Activated CD8-positive, alpha-beta memory T cell treated with anti-CD3 and anti-CD28 coated beads, Interleukin-2, amount 10 ng/mL, durations not matched to agents 7 days and 5 days (primary cell): ENCODE measurements at regions of chr7 and their contacts with region 1.

Region 1: GRCh38 chr7:5396999-5397663 is 26.5 kb downstream of the TNRC18 start:
- DNase-seq: peak; percentile 96
- ATAC-seq: peak; percentile 94
- H3K4me3 Mint-ChIP-seq: peak overlapping the region; percentile 79
- H3K27ac Mint-ChIP-seq: peak overlapping the region; percentile 97
- H3K4me1 Mint-ChIP-seq: peaks cover 38% of the 10 kb centered on the region
- H3K27me3 Mint-ChIP-seq: no peaks in the 10 kb centered on the region

Region 2: GRCh38 chr7:5237286-5237685 is 159.8 kb before region 1 on chr7:
- CTCF ChIA-PET with region 1: interaction called, 18 read pairs
- DNase-seq: no peak
- ATAC-seq: no peak
- H3K4me3 Mint-ChIP-seq: no peak overlapping the region
- H3K27ac Mint-ChIP-seq: no peak overlapping the region
- H3K4me1 Mint-ChIP-seq: peaks cover 22% of the 10 kb centered on the region
- H3K27me3 Mint-ChIP-seq: peaks cover 24% of the 10 kb centered on the region

Region 3: DNA sequence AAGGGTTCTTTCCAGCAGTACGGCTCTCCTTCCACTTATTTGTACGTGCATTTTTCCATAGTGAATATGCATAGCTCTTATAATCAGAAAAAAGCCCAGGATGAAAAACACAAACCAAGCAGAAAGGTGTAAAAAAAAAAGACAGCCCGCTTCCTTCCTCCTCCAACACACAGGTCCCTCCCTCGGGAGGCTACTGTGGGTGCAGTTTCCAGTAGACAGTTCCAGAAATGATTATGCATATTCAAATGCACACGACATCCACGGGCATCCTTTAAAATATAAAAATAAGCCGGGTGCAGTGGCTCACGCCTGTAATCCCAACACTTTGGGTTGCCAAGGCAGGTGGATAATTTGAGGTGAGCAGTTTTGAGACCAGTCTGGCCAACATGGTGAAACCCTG is 33.4 kb before region 1 on chr7:
- CTCF ChIA-PET with region 1: interaction called, 13 read pairs
- DNase-seq: peak; percentile 56
- ATAC-seq: peak; percentile 66
- H3K4me3 Mint-ChIP-seq: no peak overlapping the region
- H3K27ac Mint-ChIP-seq: peak overlapping the region; percentile 45
- H3K4me1 Mint-ChIP-seq: peaks cover 27% of the 10 kb centered on the region
- H3K27me3 Mint-ChIP-seq: no peaks in the 10 kb centered on the region

Region 4: GRCh38 chr7:5423844-5424688 is 26.9 kb after region 1 on chr7:
- CTCF ChIA-PET with region 1: interaction called, 30 read pairs
- DNase-seq: peak; percentile 56
- ATAC-seq: peak; percentile 59
- H3K4me3 Mint-ChIP-seq: peak overlapping the region; percentile 59
- H3K27ac Mint-ChIP-seq: peak overlapping the region; percentile 30
- H3K4me1 Mint-ChIP-seq: peaks cover 31% of the 10 kb centered on the region
- H3K27me3 Mint-ChIP-seq: peaks cover 79% of the 10 kb centered on the region

Region 5: DNA sequence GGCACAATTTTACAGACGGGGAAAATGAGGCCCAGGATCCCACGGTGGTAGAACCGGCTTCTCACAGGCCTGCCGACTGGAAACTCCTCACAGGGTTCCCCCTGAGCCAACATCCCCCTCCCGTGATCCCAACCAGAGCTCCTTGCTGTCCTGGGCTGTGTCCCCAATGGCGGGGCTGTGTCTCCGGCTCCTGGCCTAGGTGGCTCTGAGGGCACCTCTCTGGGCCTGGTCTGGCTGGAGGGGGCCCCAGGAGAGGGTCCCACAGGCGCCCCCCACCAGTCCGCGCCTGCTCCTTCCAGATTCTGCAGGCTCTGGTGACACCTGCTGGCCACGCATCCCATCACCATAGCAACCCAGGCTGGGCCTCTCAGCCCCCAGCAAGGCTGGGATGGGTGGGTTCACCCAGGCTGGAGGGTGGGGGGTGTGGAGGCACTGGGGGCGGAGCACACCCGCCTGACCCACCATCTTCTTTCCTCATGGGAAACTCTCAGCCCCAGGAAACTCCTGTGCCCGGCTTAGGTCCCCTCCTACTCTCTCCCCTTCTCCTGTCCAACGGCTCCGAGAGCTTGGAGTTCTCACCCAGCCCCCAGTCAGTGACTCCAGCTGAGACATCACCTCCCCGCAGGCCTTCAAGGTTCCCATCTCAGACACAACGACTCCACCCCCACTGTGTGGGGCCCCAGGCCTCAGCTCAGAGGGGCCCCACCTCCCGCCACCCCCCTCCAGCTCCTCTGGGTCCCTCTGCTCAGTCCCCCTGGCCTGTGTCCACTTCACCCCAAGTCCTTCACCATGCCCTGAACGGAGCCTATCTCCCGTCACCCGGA is 53.6 kb after region 1 on chr7:
- CTCF ChIA-PET with region 1: interaction called, 16 read pairs
- DNase-seq: peak; percentile 52
- ATAC-seq: peak; percentile 49
- H3K4me3 Mint-ChIP-seq: no peak overlapping the region
- H3K27ac Mint-ChIP-seq: no peak overlapping the region
- H3K4me1 Mint-ChIP-seq: no peaks in the 10 kb centered on the region
- H3K27me3 Mint-ChIP-seq: no peaks in the 10 kb centered on the region

Region 6: GRCh38 chr7:5494683-5495561 is 97.8 kb after region 1 on chr7:
- CTCF ChIA-PET with region 1: interaction called, 14 read pairs
- DNase-seq: peak; percentile 85
- ATAC-seq: peak; percentile 93
- H3K4me3 Mint-ChIP-seq: no peak overlapping the region
- H3K27ac Mint-ChIP-seq: peak overlapping the region; percentile 11
- H3K4me1 Mint-ChIP-seq: peaks cover 22% of the 10 kb centered on the region
- H3K27me3 Mint-ChIP-seq: no peaks in the 10 kb centered on the region